Sciatic nerve (tissue), 2 donors: ENCODE measurements at regions of chr13 and their contacts with region 1.

Region 1: DNA sequence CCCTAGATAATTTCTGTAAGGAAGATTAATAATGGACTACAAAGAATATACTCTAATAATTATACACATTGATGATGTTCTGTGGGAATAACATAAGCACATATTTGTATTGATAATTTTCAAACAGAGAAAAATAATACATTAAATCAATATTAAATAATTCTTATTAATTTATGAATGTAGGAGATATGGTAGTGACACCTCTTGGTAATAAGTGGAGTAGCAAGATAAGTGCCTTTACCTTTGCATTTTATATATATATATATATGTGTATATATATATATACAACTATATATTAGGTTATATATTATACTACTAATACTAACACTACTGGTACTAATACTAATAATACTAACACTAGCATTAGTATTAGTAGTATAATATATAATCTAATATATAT is 905.8 kb downstream of the SLITRK1 start:
- DNase-seq: no peak
- ATAC-seq: no peak

Region 2: GRCh38 chr13:81377921-81378320 is 1598.6 kb before region 1 on chr13:
- intact Hi-C with region 1: loop called (anchors 5 kb)
- DNase-seq: no peak
- ATAC-seq: no peak

Region 3: GRCh38 chr13:84137292-84137691 is 1160.8 kb after region 1 on chr13:
- intact Hi-C with region 1: no loop called
- DNase-seq: no peak
- ATAC-seq: no peak

Region 4: DNA sequence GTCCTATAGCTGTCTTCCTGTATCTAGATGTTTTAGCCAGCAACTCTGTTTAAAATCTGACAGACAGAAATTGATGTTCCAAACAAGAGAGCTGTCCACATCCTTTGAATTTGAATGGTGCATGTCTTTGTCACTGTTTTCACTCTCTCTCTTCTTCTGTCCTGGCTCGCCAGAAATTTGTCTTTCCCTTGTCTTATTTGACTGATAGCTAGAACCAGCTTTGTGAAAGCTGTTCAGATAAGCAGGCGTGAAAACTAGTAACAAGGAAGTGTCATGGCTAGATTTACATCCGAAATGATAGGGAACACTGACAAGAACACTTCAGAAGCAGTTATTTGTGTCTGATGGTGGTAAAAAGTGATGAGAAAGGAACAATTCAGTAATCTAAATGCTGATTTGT is 1260.6 kb after region 1 on chr13:
- intact Hi-C with region 1: no loop called
- DNase-seq: no peak
- ATAC-seq: no peak